Activated B cell treated with CpG ODN at 0.5 μM for 24 hours (primary cell): ENCODE measurements at regions of chr13 and their contacts with region 1.

Region 1: GRCh38 chr13:98927951-98928927 is 49.6 kb downstream of the DOCK9 start:
- DNase-seq: no peak
- ATAC-seq: no peak
- H3K4me3 Mint-ChIP-seq: no peak overlapping the region
- H3K27ac Mint-ChIP-seq: no peak overlapping the region
- H3K4me1 Mint-ChIP-seq: peaks cover 7% of the 10 kb centered on the region
- H3K27me3 Mint-ChIP-seq: no peaks in the 10 kb centered on the region
- CTCF ChIP-seq: no peak

Region 2: DNA sequence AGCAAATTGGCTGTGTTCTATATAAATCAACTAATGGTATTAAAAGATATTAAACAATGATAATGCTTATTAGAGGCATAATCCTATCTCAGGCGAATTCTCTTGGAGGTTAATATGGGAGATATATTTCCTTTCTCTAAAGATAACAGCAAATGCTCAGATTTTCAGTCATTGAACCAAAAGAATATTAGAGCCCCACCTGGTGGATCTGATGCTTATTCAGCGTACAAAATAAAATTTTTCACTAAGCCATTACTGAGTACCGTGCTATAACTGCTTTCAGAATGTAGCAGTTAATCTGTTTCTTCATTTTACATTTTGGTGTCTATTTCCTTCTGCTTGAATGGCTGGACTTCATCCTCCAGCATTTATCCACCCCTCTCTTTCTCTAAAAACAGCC is 1118.1 kb before region 1 on chr13:
- CTCF ChIA-PET with region 1: no interaction called
- POLR2A ChIA-PET with region 1: no interaction called
- intact Hi-C with region 1: loop called (anchors 10 kb)
- DNase-seq: no peak
- ATAC-seq: no peak
- H3K4me3 Mint-ChIP-seq: no peak overlapping the region
- H3K27ac Mint-ChIP-seq: no peak overlapping the region
- H3K4me1 Mint-ChIP-seq: no peaks in the 10 kb centered on the region
- H3K27me3 Mint-ChIP-seq: peaks cover 7% of the 10 kb centered on the region
- CTCF ChIP-seq: no peak